ENCODE measurements at regions of chr7 and their contacts with region 1.

Region 1: GRCh38 chr7:129218514-129219062 is 6.2 kb upstream of the AHCYL2 start:
- DNase-seq: peak; percentile 79
- CTCF ChIP-seq: peak; percentile 90

Region 2: GRCh38 chr7:129163875-129164544 is 54.6 kb before region 1 on chr7:
- CTCF ChIA-PET with region 1: interaction called, 46 read pairs
- POLR2A ChIA-PET with region 1: no interaction called
- DNase-seq: no peak
- CTCF ChIP-seq: peak; percentile 68

Region 3: GRCh38 chr7:129252128-129252527 is 33.5 kb after region 1 on chr7:
- CTCF ChIA-PET with region 1: interaction called, 22 read pairs
- POLR2A ChIA-PET with region 1: no interaction called
- DNase-seq: no peak
- CTCF ChIP-seq: no peak

Region 4: GRCh38 chr7:129285111-129285510 is 66.5 kb after region 1 on chr7:
- CTCF ChIA-PET with region 1: interaction called, 19 read pairs
- POLR2A ChIA-PET with region 1: no interaction called
- DNase-seq: no peak
- CTCF ChIP-seq: no peak

Region 5: DNA sequence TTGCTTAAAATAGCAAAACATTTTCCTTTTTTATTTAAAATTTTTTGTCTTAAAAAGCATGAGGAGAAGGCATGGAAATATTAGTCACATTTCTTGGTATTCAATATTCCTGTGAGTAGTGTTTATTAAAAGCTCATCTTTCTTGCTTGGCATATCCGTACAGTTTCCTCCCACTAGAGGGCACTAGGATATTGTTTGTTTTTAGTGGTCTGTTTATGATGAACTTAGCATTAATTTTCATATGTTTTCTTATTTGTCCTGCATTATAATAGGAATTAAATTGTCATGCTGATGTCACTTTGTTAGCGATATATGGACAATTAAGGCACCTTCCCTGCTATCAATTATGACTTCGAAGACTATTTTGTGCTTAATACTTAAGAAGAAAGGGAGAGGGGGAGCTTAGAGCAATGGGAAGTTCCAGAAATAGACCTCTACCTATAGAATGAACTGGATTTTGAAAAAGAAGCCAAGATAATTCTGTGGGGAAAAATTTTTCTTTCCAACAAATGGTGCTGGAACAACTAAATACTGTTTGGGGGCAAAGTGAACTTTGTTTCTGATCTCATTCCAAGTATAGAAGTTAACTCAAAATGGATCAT is 124.6 kb after region 1 on chr7:
- CTCF ChIA-PET with region 1: interaction called, 23 read pairs
- POLR2A ChIA-PET with region 1: no interaction called
- DNase-seq: peak; percentile 44
- CTCF ChIP-seq: peak; percentile 70

Region 6: DNA sequence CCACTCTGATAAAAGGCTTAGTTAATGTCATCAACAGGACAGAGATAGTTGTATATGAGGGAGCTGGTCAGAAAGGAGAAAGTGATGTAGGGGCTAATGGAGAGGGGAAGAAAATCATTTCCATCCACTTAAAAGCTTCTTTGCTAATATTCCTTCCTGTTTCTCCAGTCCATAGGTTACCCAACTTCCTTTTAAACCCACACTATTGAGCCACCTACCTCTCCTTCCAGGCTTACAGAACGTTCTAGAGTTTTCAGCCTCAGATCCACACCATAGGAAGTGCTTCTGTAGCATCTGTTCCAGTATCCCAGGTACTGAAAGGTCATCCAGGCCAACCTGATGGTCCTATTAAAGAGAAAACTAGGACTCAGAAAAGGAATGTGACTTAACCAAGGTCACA is 243.8 kb after region 1 on chr7:
- CTCF ChIA-PET with region 1: interaction called, 73 read pairs
- POLR2A ChIA-PET with region 1: no interaction called
- DNase-seq: no peak
- CTCF ChIP-seq: no peak